PC-3 (cell line): ENCODE measurements at regions of chr5 and their contacts with region 1.

Region 1: GRCh38 chr5:173451031-173451430 is 122.8 kb upstream of the STC2 start:
- DNase-seq: peak; percentile 39
- ATAC-seq: no peak
- H3K4me3 ChIP-seq: no peak overlapping the region
- H3K27ac ChIP-seq: peak overlapping the region; percentile 95
- H3K4me1 ChIP-seq: peaks cover 45% of the 10 kb centered on the region
- H3K27me3 ChIP-seq: no peaks in the 10 kb centered on the region
- CTCF ChIP-seq: peak; percentile 70

Region 2: GRCh38 chr5:173371400-173371799 is 79.6 kb before region 1 on chr5:
- CTCF ChIA-PET with region 1: no interaction called
- POLR2A ChIA-PET with region 1: no interaction called
- intact Hi-C with region 1: no loop called
- DNase-seq: no peak
- ATAC-seq: no peak
- H3K4me3 ChIP-seq: no peak overlapping the region
- H3K27ac ChIP-seq: no peak overlapping the region
- H3K4me1 ChIP-seq: no peaks in the 10 kb centered on the region
- H3K27me3 ChIP-seq: no peaks in the 10 kb centered on the region
- CTCF ChIP-seq: no peak

Region 3: DNA sequence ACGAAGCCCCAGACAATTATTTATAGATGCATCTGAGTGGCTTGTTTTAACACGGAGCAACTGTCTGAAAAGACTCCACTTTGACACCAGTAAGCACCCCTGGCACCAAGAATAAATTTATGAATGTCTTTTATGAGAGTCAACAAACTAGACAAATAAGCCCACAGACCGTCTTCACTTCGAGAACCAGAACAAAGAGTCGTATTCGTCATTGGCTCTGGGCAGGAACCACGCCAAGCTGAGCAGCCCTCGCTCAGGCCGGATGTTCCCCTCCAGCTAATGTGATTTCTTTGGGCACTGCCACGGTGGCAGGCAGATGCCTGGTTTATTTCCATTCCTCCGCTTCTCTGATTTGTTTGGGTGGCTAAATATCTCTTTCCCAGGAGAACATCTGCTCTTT is 30.9 kb before region 1 on chr5:
- CTCF ChIA-PET with region 1: no interaction called
- POLR2A ChIA-PET with region 1: no interaction called
- intact Hi-C with region 1: loop called (anchors 2 kb)
- DNase-seq: peak; percentile 78
- ATAC-seq: peak; percentile 97
- H3K4me3 ChIP-seq: no peak overlapping the region
- H3K27ac ChIP-seq: peak overlapping the region; percentile 46
- H3K4me1 ChIP-seq: peaks cover 10% of the 10 kb centered on the region
- H3K27me3 ChIP-seq: no peaks in the 10 kb centered on the region
- CTCF ChIP-seq: no peak

Region 4: GRCh38 chr5:173472141-173472543 is 21.1 kb after region 1 on chr5:
- CTCF ChIA-PET with region 1: interaction called, 3 read pairs
- POLR2A ChIA-PET with region 1: no interaction called
- intact Hi-C with region 1: loop called (anchors 1 kb)
- DNase-seq: peak; percentile 99
- ATAC-seq: peak; percentile 96
- H3K4me3 ChIP-seq: no peak overlapping the region
- H3K27ac ChIP-seq: peak overlapping the region; percentile 88
- H3K4me1 ChIP-seq: peaks cover 23% of the 10 kb centered on the region
- H3K27me3 ChIP-seq: no peaks in the 10 kb centered on the region
- CTCF ChIP-seq: no peak

Region 5: DNA sequence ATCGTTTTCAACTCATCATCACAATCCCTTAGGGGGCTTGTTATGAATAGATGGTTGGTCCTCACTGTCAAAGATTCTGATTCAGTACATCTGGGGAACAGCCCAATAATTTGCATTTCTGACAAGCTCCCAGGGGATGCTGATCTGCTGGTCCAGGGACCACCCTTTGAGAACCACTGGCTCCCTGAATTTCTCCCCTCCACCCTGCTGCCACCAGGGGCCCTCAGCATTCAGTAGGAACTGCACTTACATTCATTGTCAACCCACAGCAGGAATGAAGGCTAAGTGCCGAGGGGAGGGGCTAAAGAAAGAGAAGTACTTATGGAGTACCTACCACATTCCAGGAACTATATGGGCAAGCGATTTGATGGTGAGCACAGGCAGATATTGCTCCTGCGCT is 79.5 kb after region 1 on chr5:
- CTCF ChIA-PET with region 1: no interaction called
- POLR2A ChIA-PET with region 1: no interaction called
- intact Hi-C with region 1: no loop called
- DNase-seq: peak; percentile 33
- ATAC-seq: peak; percentile 73
- H3K4me3 ChIP-seq: no peak overlapping the region
- H3K27ac ChIP-seq: no peak overlapping the region
- H3K4me1 ChIP-seq: no peaks in the 10 kb centered on the region
- H3K27me3 ChIP-seq: no peaks in the 10 kb centered on the region
- CTCF ChIP-seq: peak; percentile 60

Region 6: GRCh38 chr5:173567574-173567973 is 116.5 kb after region 1 on chr5:
- CTCF ChIA-PET with region 1: interaction called, 3 read pairs
- POLR2A ChIA-PET with region 1: no interaction called
- intact Hi-C with region 1: loop called (anchors 1 kb)
- DNase-seq: peak; percentile 97
- ATAC-seq: peak; percentile 84
- H3K4me3 ChIP-seq: 0 out of 2 replicates have a peak overlapping the region, but pooled peaks have one; percentile 9
- H3K27ac ChIP-seq: peak overlapping the region; percentile 80
- H3K4me1 ChIP-seq: peaks cover 25% of the 10 kb centered on the region
- H3K27me3 ChIP-seq: no peaks in the 10 kb centered on the region
- CTCF ChIP-seq: no peak

Region 7: DNA sequence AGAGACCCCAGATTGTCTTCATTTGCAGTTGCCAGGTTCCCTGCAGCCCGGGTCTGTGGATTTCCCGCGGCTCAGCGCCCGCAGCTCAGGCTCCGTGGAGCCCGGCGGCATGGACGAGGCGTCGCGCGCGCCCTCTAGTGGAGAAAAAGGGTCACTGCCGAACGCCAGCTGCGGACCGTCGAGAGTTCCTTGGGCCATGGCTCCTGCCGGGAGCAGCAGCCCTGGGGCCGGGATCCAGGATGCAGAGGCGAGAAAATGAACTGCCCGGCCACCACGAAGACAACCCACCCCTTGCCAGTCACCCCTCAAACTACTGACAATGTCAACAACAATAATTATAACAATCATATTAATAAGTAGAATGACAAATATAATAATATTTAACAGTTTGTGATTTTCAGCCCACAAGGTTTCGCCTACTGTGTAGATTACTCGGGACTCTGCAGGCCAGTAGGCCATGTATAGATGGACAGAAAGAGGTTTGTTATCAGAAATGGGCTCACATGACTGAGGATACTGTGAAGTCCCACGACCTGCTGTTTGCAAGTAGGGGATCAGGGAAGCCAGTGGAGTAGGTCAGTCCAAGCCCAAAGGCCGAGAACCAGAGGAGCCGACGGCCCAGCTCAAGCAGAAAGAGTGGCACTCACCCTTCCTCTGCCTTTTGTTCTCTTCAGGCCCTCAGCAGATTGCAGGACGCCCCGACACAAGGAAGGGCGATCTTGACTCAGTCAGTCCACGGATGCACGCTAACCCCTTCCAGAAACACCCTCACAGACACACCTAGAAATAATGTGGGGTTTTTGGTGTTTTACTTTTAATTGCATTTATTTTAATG is 122.3 kb after region 1 on chr5:
- CTCF ChIA-PET with region 1: interaction called, 3 read pairs
- POLR2A ChIA-PET with region 1: no interaction called
- intact Hi-C with region 1: loop called (anchors 2 kb)
- DNase-seq: peak; percentile 86
- ATAC-seq: peak; percentile 94
- H3K4me3 ChIP-seq: peak overlapping the region; percentile 46; the same call in 1 of the 2 replicates
- H3K27ac ChIP-seq: no peak overlapping the region
- H3K4me1 ChIP-seq: peaks cover 11% of the 10 kb centered on the region
- H3K27me3 ChIP-seq: no peaks in the 10 kb centered on the region
- CTCF ChIP-seq: peak; percentile 97